ENCODE measurements at regions of chr2 and their contacts with region 1.

Region 1: GRCh38 chr2:164495491-164496223 is 125.6 kb downstream of the GRB14 start:
- DNase-seq: no peak
- ATAC-seq: no peak
- H3K4me3 ChIP-seq: no peak overlapping the region
- H3K27ac ChIP-seq: no peak overlapping the region
- H3K4me1 ChIP-seq: no peaks in the 10 kb centered on the region
- H3K27me3 ChIP-seq: no peaks in the 10 kb centered on the region
- CTCF ChIP-seq: peak in 2 of 5 experiments; percentile 15 to 38
- POLR2A ChIP-seq: no peak

Region 2: DNA sequence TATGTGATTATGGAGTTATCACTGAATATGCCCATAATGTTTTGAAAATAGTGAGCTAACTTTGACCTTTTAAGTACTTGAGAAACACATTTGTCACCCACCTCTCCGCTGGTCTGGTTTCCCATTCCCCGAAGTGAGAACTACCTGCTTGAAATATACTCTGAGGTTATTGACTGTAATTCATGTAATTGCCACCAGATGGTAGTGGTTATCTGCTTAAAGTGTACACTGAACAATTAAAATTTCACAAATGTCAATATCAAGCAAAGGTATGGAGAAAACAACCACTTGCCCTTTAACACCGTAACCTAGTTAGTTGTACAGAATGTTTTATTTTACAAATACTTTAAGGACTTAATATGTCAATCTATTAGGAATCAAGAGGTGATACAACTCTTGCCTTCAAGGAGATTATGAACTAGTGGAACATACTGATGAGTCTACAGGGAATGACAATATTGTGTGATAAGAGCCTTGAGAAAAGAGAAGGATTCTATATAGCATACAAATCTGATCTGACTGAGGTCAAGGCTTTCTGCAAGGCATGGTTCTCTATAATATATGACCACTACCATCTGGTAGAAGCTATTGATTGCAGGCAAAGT is 1340.3 kb before region 1 on chr2:
- in situ Hi-C with region 1: loop called in 1 of 4 experiments (anchors 25 kb)
- intact Hi-C with region 1: no loop called
- DNase-seq: no peak
- ATAC-seq: peak in 1 of 2 donors; percentile 39
- H3K4me3 ChIP-seq: no peak overlapping the region
- H3K27ac ChIP-seq: no peak overlapping the region
- H3K4me1 ChIP-seq: no peaks in the 10 kb centered on the region
- H3K27me3 ChIP-seq: no peaks in the 10 kb centered on the region
- CTCF ChIP-seq: peak in 4 of 5 experiments; percentile 22 to 40 (median 36)
- POLR2A ChIP-seq: no peak

Region 3: DNA sequence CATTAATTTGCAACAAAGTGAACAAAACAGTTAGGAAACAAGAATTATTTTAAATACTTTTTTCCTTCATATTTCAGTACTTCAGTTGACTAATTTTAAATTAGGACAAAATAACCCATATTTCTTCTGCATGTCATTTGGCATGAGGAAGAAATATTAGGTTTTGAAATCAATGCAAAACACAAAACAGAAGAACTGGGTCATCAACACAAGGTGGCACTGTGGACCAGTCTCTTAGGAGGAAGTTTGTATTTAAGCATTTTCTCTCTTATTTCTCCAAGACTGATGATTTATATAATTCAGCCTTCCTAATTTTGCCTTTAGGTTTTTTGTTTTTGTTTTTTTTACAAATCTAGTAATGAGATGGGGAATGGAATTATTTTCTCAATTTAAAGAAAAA is 1304.3 kb before region 1 on chr2:
- in situ Hi-C with region 1: loop called in 1 of 4 experiments (anchors 25 kb)
- intact Hi-C with region 1: no loop called
- DNase-seq: no peak
- ATAC-seq: no peak
- H3K4me3 ChIP-seq: no peak overlapping the region
- H3K27ac ChIP-seq: no peak overlapping the region
- H3K4me1 ChIP-seq: no peaks in the 10 kb centered on the region
- H3K27me3 ChIP-seq: no peaks in the 10 kb centered on the region
- CTCF ChIP-seq: peak in 3 of 5 experiments; percentile 23 to 43 (median 25)
- POLR2A ChIP-seq: no peak

Region 4: GRCh38 chr2:164554487-164554886 is 58.8 kb after region 1 on chr2:
- in situ Hi-C with region 1: no loop called
- intact Hi-C with region 1: no loop called
- DNase-seq: no peak
- ATAC-seq: no peak
- H3K4me3 ChIP-seq: no peak overlapping the region
- H3K27ac ChIP-seq: no peak overlapping the region
- H3K4me1 ChIP-seq: peaks cover 0 to 4% of the 10 kb centered on the region in 2 donors
- H3K27me3 ChIP-seq: no peaks in the 10 kb centered on the region
- CTCF ChIP-seq: no peak
- POLR2A ChIP-seq: no peak

Region 5: GRCh38 chr2:165008730-165009315 is 513.2 kb after region 1 on chr2:
- in situ Hi-C with region 1: no loop called
- intact Hi-C with region 1: no loop called
- DNase-seq: no peak
- ATAC-seq: no peak
- H3K4me3 ChIP-seq: no peak overlapping the region
- H3K27ac ChIP-seq: no peak overlapping the region
- H3K4me1 ChIP-seq: no peaks in the 10 kb centered on the region
- H3K27me3 ChIP-seq: no peaks in the 10 kb centered on the region
- CTCF ChIP-seq: no peak
- POLR2A ChIP-seq: no peak